Panc1 (cell line): ENCODE measurements at regions of chr10 and their contacts with region 1.

Region 1: DNA sequence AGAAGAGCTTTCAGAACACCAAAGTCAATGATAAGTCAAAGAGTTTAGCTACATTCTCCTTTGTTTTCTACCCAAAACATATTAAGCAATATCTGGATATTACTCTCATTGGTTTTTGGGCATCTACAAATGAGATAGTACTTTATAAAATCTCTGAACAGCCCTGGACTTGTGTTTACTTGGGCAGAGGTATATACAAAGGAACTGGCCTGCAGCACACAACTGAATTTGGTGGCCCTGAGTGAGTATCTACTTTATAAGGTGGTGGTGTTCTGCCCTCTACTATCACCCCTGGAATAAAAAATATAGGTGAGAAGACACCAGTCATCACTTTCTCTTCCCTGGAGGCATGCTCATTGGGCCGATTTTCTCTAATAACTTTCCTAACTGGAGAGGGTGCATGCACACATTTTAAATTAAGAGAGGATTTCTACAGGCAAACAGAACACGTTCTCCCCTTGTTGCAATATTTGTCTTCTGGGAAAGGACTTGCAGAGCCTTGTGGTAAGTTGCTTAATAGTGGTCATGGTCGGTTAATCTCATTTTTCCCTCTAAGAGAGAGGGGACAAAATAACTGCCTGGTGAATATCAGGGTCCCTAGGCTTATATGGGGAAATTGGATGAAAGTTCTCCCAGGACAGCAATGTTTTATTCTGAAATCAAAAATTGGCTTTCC is 41.1 kb downstream of the OTUD1 start:
- DNase-seq: no peak
- ATAC-seq: no peak
- H3K4me3 ChIP-seq: no peak overlapping the region
- H3K27ac ChIP-seq: no peak overlapping the region
- H3K4me1 ChIP-seq: no peaks in the 10 kb centered on the region
- H3K27me3 ChIP-seq: no peaks in the 10 kb centered on the region
- CTCF ChIP-seq: no peak

Region 2: DNA sequence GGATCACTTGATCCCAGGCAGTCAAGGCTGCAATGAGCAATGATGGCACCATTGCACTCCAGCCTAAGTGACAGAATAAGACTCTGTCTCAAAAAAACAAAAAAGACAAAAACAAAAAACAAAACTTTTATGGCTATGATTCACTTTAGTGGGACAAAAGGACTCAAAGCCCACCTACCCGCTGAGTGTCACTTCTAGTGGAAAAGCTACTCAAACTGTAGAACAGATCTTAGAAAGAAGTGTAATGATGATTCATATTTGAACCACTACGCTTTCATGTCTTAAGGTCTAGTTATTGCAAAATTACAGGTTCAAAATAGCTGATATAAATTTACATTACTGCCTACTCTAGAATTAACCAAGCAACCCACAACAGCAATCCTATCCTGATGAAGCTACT is 88.1 kb before region 1 on chr10:
- CTCF ChIA-PET with region 1: no interaction called
- POLR2A ChIA-PET with region 1: no interaction called
- in situ Hi-C with region 1: no loop called
- intact Hi-C with region 1: no loop called
- DNase-seq: no peak
- ATAC-seq: no peak
- H3K4me3 ChIP-seq: no peak overlapping the region
- H3K27ac ChIP-seq: no peak overlapping the region
- H3K4me1 ChIP-seq: no peaks in the 10 kb centered on the region
- H3K27me3 ChIP-seq: no peaks in the 10 kb centered on the region
- CTCF ChIP-seq: no peak

Region 3: GRCh38 chr10:23432166-23432565 is 47.8 kb before region 1 on chr10:
- CTCF ChIA-PET with region 1: interaction called, 11 read pairs
- POLR2A ChIA-PET with region 1: no interaction called
- in situ Hi-C with region 1: no loop called
- intact Hi-C with region 1: no loop called
- DNase-seq: no peak
- ATAC-seq: no peak
- H3K4me3 ChIP-seq: no peak overlapping the region
- H3K27ac ChIP-seq: no peak overlapping the region
- H3K4me1 ChIP-seq: no peaks in the 10 kb centered on the region
- H3K27me3 ChIP-seq: no peaks in the 10 kb centered on the region
- CTCF ChIP-seq: no peak